PC-9 (cell line): ENCODE measurements at regions of chr3 and their contacts with region 1.

Region 1: DNA sequence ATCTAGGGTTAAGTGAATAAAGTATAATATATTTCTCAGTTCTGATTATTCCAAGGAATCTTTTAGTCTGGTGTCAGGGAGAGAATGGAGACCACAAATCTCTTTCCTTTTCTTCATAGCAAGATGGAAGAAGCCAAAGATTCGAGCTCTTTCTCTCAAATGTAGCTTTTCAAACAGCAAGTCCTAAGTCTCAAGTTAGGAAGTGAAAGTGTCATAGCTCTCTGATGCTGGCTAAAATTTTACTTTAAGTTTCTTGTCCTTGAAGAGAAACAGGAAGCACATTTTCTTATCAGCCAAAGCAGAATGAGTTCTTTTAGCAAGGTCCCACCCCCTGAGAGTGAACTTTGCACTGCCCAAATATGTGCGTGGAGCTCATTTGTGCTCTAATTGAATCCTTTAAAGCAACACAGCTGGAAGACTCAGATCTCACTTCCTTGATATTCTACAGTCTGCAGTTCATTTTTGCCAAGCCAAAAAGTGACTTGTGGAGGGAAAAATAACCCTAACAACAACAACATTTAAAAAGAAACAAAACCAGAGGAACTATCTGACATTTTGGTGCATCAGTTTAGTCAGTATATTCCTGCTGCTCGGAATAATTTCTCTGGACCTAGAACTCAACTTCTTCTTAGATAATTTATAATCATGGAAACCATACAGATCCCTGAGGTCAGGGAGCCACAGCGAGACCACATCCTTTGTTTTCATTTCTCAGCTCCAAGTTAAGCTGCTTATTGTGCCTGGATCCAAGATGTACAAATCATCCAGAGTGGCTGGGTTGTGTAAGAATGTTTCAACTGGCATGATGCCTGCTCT is 238.7 kb upstream of the P2RY1 start:
- DNase-seq: no peak
- H3K4me3 ChIP-seq: no peak overlapping the region
- H3K27ac ChIP-seq: no peak overlapping the region
- H3K4me1 ChIP-seq: 0 out of 2 replicates have a peak, but pooled peaks cover 4% of the 10 kb centered on the region
- H3K27me3 ChIP-seq: no peaks in the 10 kb centered on the region
- CTCF ChIP-seq: no peak

Region 2: GRCh38 chr3:151262871-151263525 is 1333.2 kb before region 1 on chr3:
- CTCF ChIA-PET with region 1: interaction called, 10 read pairs
- POLR2A ChIA-PET with region 1: no interaction called
- intact Hi-C with region 1: no loop called
- DNase-seq: no peak
- H3K4me3 ChIP-seq: no peak overlapping the region
- H3K27ac ChIP-seq: no peak overlapping the region
- H3K4me1 ChIP-seq: no peaks in the 10 kb centered on the region
- H3K27me3 ChIP-seq: no peaks in the 10 kb centered on the region
- CTCF ChIP-seq: no peak

Region 3: DNA sequence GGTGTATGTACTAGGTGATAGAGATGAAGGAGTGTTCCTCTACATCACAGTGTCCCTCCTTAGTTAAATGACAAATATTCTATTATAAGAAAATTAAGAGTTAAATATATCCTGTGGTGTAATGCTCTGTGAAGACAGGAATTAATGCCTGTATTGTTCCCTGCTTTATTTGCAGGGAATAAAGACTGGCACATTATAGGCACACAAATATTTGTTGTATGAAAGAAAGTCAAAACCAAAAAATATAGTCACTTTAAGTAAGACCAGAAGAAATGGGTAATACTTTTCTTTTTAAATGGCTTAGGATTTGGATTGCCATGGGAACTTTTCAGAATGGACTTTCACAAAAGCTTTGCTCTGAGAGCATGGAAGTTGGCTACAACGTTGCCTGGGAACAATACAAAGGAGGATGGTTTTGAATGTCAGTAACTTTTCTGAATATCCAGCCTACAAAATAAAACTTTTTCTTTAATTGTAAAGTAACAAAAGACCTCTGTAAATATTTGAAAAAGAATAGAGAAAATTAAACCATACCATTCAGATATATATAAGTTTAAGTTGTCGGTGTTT is 80.7 kb after region 1 on chr3:
- CTCF ChIA-PET with region 1: no interaction called
- POLR2A ChIA-PET with region 1: no interaction called
- intact Hi-C with region 1: no loop called
- DNase-seq: no peak
- H3K4me3 ChIP-seq: no peak overlapping the region
- H3K27ac ChIP-seq: no peak overlapping the region
- H3K4me1 ChIP-seq: no peaks in the 10 kb centered on the region
- H3K27me3 ChIP-seq: no peaks in the 10 kb centered on the region
- CTCF ChIP-seq: no peak